ENCODE measurements at regions of chrX and their contacts with region 1.

Region 1: DNA sequence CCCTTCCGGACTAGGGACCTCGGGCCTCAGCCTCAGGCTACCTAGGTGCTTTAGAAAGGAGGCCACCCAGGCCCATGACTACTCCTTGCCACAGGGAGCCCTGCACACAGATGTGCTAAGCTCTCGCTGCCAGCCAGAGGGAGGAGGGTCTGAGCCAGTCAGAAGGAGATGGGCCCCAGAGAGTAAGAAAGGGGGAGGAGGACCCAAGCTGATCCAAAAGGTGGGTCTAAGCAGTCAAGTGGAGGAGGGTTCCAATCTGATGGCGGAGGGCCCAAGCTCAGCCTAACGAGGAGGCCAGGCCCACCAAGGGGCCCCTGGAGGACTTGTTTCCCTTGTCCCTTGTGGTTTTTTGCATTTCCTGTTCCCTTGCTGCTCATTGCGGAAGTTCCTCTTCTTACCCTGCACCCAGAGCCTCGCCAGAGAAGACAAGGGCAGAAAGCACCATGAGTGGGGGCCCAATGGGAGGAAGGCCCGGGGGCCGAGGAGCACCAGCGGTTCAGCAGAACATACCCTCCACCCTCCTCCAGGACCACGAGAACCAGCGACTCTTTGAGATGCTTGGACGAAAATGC is at the start of gene WAS:
- DNase-seq: peak; percentile 74
- ATAC-seq: peak; percentile 93
- H3K4me3 Mint-ChIP-seq: peak within 1 kb of the TSS; percentile 80
- H3K27ac Mint-ChIP-seq: peak within 1 kb of the TSS; percentile 98
- H3K4me1 Mint-ChIP-seq: peaks cover 50% of the 10 kb centered on the region
- H3K27me3 Mint-ChIP-seq: no peaks in the 10 kb centered on the region
- CTCF ChIP-seq: no peak
- total RNA-seq, gene WAS: 81.6 to 81.9 TPM

Region 2: DNA sequence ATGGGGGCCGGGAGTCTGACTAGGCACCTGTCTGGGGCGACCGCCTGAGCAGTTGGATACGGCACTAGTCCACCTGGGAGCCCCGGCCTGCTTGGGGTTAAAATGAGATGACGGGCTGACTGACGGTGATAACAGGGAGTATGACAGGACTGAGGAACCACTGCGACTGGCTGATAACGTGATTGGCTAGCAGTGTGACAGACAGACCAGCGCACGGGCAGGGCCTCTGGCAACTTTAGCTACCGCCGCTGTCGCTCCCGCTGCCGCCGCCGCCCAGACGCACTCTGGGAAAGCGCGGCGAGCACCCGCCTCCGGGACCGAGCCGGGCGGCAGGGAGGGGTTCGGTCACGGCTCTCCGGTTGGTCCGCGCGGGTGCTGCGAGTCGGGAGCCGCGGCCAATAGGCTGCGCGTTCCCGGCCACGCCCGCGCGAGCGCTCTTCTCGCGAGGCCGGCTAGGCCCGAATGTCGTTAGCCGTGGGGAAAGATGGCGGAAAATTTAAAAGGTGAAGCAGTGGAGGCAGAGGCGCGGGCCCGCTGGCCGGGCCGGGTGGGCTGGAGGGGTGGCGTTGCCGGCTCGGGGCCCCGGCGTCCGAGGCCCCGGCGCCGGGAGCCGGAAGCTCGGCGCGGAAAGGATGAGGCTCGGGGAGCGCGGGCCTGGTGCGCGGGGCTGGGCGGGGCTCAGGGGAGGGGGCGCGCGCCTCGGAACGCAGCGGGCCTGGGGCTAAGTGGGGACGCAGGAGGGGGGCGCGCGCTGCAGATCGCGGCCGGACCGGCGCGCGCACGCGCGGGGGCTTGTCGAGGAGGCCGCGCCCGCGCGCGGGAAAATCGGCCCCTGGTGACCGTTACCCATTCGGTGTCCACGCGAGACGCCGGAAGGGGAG is 13.0 kb after region 1 on chrX and contains the start of gene SUV39H1:
- CTCF ChIA-PET with region 1: interaction called, 5 read pairs
- POLR2A ChIA-PET with region 1: interaction called, 10 read pairs
- intact Hi-C with region 1: no loop called
- DNase-seq: peak; percentile 87
- ATAC-seq: peak; percentile 94
- H3K4me3 Mint-ChIP-seq: peak within 1 kb of the TSS; percentile 81
- H3K27ac Mint-ChIP-seq: peak within 1 kb of the TSS; percentile 94
- H3K4me1 Mint-ChIP-seq: peaks cover 26% of the 10 kb centered on the region
- H3K27me3 Mint-ChIP-seq: no peaks in the 10 kb centered on the region
- CTCF ChIP-seq: no peak
- total RNA-seq, gene SUV39H1: 26.8 to 28.4 TPM

Region 3: GRCh38 chrX:49892542-49892941 is 1209.0 kb after region 1 on chrX:
- CTCF ChIA-PET with region 1: no interaction called
- POLR2A ChIA-PET with region 1: no interaction called
- intact Hi-C with region 1: no loop called
- DNase-seq: no peak
- ATAC-seq: no peak
- H3K4me3 Mint-ChIP-seq: no peak overlapping the region
- H3K27ac Mint-ChIP-seq: no peak overlapping the region
- H3K4me1 Mint-ChIP-seq: no peaks in the 10 kb centered on the region
- H3K27me3 Mint-ChIP-seq: peaks cover 4% of the 10 kb centered on the region
- CTCF ChIP-seq: no peak